Activated B cell treated with CpG ODN at 0.5 μM for 24 hours (primary cell): ENCODE measurements at regions of chr15 and their contacts with region 1.

Region 1: DNA sequence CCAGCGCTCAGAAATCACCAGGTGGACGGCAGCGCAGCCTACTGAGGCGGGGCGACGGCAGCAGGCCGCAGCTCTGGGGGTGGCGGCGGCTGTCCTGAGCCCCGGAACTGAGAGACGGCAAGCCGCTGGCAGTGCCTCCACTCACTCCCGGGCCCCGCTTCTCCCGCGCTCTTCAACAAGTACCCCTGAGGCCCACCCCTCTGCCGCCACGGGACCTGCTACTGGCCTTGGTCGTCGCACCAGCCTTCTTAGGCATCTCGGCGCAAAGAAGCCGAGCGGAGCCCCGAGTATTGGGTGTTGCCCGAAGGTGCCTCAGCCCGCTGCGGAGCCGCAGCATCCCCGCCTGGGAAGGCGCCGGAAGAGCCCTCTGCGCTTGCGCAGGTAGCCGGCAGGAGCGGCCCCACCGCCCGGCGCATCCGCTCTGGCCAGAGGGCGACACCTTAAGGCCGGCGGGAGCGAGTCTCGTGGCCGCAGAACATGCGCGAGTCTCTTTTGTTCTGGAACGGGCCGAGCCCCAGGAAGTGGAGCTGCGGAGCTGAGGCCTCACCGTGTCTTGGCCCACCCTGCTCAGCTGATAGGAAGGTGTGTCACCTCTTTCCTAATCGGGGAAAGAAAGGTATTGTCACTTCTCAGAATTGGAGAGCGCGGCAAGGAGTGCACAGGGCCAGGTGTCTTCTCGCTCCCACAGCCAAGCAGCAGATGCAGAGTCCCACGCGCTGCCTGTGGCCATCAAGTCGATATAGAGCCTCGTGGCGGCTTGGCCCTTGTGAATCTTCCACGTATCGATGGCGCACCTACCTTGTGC is at the start of gene C15orf40:
- DNase-seq: peak; percentile 89
- ATAC-seq: peak; percentile 88
- H3K4me3 Mint-ChIP-seq: peak within 1 kb of the TSS; percentile 97
- H3K27ac Mint-ChIP-seq: peak within 1 kb of the TSS; percentile 87
- H3K4me1 Mint-ChIP-seq: peaks cover 40% of the 10 kb centered on the region
- H3K27me3 Mint-ChIP-seq: no peaks in the 10 kb centered on the region
- CTCF ChIP-seq: no peak
- total RNA-seq, gene C15orf40: 33.3 and 41.9 TPM in 2 replicates

Region 2: DNA sequence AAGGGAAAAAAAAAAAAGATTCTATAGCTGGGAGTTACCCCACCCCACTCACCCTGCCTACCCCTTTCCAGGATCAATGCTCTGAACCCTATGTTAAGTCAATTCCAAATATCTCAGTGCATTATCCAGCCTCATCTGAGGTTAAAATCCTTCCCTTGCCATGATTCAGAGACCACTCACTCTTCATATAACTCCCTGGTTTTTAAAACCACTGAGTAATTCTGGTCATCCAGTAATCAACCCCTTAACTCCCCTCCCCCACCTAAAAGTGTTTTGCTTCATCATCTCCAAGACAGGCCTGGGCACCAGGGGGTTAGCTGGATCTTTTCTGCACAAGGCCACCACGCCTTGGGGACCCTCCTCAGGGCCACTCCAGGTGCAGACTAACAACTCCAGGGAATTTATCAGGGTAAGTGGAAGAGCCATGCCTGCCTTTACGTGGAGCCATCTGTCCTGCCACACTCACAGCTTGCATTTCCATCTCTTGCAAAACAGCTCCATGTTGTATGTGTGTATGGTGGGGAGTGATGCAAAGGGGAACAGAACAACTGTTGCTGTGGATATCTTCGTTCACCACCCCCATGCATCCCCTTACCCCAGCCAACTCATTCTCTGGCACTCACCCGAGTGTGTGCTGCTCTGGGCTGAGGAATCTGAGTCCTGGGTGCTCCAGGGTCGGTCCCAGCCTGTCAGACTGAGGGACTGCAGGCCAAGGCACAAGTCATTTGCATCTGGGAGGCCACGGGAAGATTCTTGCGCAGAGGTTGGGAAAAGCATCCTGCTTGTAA is 440.6 kb before region 1 on chr15:
- CTCF ChIA-PET with region 1: no interaction called
- POLR2A ChIA-PET with region 1: no interaction called
- intact Hi-C with region 1: no loop called
- DNase-seq: no peak
- ATAC-seq: no peak
- H3K4me3 Mint-ChIP-seq: no peak overlapping the region
- H3K27ac Mint-ChIP-seq: no peak overlapping the region
- H3K4me1 Mint-ChIP-seq: no peaks in the 10 kb centered on the region
- H3K27me3 Mint-ChIP-seq: peaks cover 23% of the 10 kb centered on the region
- CTCF ChIP-seq: no peak

Region 3: DNA sequence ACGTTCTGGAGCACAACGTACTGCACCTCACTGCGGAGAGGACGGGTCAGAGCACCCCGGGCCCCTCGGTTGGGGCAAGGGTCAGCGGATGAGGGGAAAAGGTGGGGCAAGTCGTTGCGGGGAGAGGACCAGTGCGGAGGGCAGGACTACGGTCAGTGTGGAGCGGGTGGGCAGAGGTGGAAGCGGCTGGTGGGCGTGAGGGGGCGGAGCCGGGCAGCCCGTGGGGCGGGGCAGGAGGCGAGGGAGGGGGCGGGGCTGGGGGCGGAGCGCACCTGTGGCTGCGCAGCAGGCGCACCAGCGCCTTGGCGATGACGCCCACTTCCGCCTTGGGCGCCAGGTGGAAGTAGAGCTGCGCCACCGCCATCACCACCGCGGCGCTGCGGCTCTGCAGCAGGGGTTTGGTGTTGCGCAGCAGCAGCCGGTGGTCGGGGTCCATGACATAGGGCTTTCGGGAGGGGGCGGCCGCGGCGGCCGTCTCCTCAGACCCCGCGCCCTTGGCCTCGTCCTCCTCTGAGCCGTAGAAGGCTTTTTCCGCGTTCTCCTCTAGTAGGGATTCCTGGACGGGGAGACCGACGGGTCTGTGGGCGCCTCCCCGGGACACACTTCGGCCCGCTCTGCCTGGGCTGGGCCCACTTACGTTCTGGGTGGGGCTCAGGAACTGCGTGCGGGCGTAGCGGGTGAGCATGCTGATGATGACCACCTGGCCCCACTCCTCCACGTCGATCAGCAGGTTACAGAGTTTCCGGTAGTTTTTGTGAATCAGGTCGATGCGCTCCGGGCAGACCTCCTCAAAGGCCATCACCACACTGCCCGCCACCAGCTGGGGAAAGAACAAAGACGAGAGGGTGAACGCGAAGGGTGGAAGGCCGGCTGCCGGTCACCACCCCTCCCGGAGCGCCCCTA is 331.0 kb before region 1 on chr15:
- CTCF ChIA-PET with region 1: no interaction called
- POLR2A ChIA-PET with region 1: interaction called, 5 read pairs
- intact Hi-C with region 1: loop called (anchors 1 kb)
- DNase-seq: peak; percentile 59
- ATAC-seq: peak; percentile 93
- H3K4me3 Mint-ChIP-seq: peak overlapping the region; percentile 87
- H3K27ac Mint-ChIP-seq: peak overlapping the region; percentile 82
- H3K4me1 Mint-ChIP-seq: peaks cover 12% of the 10 kb centered on the region
- H3K27me3 Mint-ChIP-seq: peaks cover 11% of the 10 kb centered on the region
- CTCF ChIP-seq: no peak

Region 4: GRCh38 chr15:82809404-82810060 is 201.9 kb before region 1 on chr15 and contains the start of gene WHAMM:
- CTCF ChIA-PET with region 1: no interaction called
- POLR2A ChIA-PET with region 1: interaction called, 13 read pairs
- intact Hi-C with region 1: loop called (anchors 1 kb)
- DNase-seq: peak; percentile 91
- ATAC-seq: peak; percentile 87
- H3K4me3 Mint-ChIP-seq: peak within 1 kb of the TSS; percentile 91
- H3K27ac Mint-ChIP-seq: peak within 1 kb of the TSS; percentile 93
- H3K4me1 Mint-ChIP-seq: peaks cover 71% of the 10 kb centered on the region
- H3K27me3 Mint-ChIP-seq: no peaks in the 10 kb centered on the region
- CTCF ChIP-seq: no peak
- total RNA-seq, gene WHAMM: 17.7 and 18.7 TPM in 2 replicates

Region 5: DNA sequence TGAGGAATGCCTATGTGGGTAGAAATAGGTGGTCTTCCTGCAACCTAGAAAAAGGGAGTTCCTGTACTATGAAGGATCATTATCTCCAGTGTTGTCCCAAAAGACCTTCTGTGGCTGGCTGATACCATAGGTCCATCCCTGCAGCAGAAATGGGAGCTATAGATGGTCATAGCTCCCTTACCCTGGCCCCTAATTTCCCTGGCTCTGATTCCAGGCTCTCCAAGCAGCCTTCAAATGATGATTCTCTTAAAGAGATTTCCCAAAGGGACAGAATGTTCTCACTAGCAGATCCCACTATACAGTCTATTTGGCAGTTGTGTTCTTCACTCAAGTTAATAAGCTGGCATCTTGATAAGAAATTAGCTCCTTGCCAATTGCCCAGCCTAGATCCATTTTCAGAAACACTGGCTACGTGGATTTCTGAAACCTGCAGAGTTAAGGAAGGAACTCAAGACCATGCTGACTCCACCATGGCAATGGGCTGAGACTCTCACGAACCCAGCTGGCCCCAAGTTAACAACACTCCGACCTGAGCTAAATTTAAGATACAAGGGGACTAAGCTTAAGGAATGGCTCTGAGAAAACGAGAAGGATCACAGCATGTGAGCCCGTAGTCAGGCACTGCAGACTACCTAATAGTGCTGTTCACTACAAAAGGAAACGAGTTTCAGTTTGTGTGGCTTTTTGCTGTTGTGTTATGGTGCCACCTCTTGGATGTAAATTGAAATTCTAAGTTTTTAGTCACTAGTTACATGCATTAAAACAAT is 11.4 kb before region 1 on chr15:
- CTCF ChIA-PET with region 1: interaction called, 14 read pairs
- POLR2A ChIA-PET with region 1: interaction called, 5 read pairs
- intact Hi-C with region 1: loop called (anchors 1 kb)
- DNase-seq: no peak
- ATAC-seq: peak; percentile 85
- H3K4me3 Mint-ChIP-seq: peak overlapping the region; percentile 72
- H3K27ac Mint-ChIP-seq: peak overlapping the region; percentile 47
- H3K4me1 Mint-ChIP-seq: peaks cover 7% of the 10 kb centered on the region
- H3K27me3 Mint-ChIP-seq: no peaks in the 10 kb centered on the region
- CTCF ChIP-seq: no peak

Region 6: GRCh38 chr15:83061680-83062079 is 50.2 kb after region 1 on chr15:
- CTCF ChIA-PET with region 1: interaction called, 4 read pairs
- POLR2A ChIA-PET with region 1: interaction called, 24 read pairs
- intact Hi-C with region 1: loop called (anchors 2 kb)
- DNase-seq: no peak
- ATAC-seq: no peak
- H3K4me3 Mint-ChIP-seq: no peak overlapping the region
- H3K27ac Mint-ChIP-seq: no peak overlapping the region
- H3K4me1 Mint-ChIP-seq: peaks cover 15% of the 10 kb centered on the region
- H3K27me3 Mint-ChIP-seq: no peaks in the 10 kb centered on the region
- CTCF ChIP-seq: no peak

Region 7: GRCh38 chr15:83108266-83109226 is 97.1 kb after region 1 on chr15:
- CTCF ChIA-PET with region 1: no interaction called
- POLR2A ChIA-PET with region 1: interaction called, 4 read pairs
- intact Hi-C with region 1: loop called (anchors 5 kb)
- DNase-seq: peak; percentile 26
- ATAC-seq: peak; percentile 85
- H3K4me3 Mint-ChIP-seq: peak overlapping the region; percentile 87
- H3K27ac Mint-ChIP-seq: peak overlapping the region; percentile 65
- H3K4me1 Mint-ChIP-seq: peaks cover 20% of the 10 kb centered on the region
- H3K27me3 Mint-ChIP-seq: peaks cover 21% of the 10 kb centered on the region
- CTCF ChIP-seq: no peak

Region 8: DNA sequence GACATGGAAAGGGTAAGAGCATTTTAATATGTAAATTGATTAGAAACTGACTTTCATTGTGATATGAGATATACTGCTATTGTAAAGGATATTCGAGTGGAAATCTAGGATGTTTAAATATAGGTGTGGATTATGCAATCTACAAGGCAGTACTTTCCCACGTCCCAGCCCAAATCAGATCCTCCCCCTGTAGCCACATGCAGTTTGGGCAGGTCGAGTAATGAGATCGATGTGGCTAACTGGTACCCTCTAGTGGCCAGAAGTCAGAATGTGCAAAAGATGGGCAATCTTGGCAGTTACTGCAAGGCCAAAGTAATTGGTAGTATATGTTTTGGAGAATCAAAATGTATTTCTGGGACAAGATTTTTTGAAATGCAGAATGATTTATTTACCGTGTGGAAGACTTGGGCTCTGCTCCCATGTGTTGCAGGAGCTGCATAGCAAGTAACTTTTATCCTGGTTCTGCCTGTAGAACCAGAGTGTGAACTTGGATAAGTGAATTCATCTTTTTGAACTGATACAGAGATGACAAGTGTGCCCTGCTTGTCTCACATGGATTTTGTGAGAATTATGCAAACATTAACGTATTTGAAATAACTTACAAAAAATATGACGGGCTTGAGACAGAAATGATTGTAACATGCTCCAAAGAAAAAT is 548.0 kb after region 1 on chr15:
- CTCF ChIA-PET with region 1: no interaction called
- POLR2A ChIA-PET with region 1: no interaction called
- intact Hi-C with region 1: loop called (anchors 5 kb)
- DNase-seq: no peak
- ATAC-seq: peak; percentile 49
- H3K4me3 Mint-ChIP-seq: no peak overlapping the region
- H3K27ac Mint-ChIP-seq: no peak overlapping the region
- H3K4me1 Mint-ChIP-seq: no peaks in the 10 kb centered on the region
- H3K27me3 Mint-ChIP-seq: peaks cover 7% of the 10 kb centered on the region
- CTCF ChIP-seq: no peak